ENCODE measurements at regions of chr1 and their contacts with region 1.

Region 1: GRCh38 chr1:245091818-245092637 is 62.8 kb upstream of the KIF26B start:
- DNase-seq: peak; percentile 99
- H3K4me3 ChIP-seq: no peak overlapping the region
- H3K27ac ChIP-seq: peak overlapping the region; percentile 96
- H3K4me1 ChIP-seq: peaks cover 23% of the 10 kb centered on the region
- H3K27me3 ChIP-seq: no peaks in the 10 kb centered on the region
- CTCF ChIP-seq: no peak
- POLR2A ChIP-seq: peak; percentile 63

Region 2: DNA sequence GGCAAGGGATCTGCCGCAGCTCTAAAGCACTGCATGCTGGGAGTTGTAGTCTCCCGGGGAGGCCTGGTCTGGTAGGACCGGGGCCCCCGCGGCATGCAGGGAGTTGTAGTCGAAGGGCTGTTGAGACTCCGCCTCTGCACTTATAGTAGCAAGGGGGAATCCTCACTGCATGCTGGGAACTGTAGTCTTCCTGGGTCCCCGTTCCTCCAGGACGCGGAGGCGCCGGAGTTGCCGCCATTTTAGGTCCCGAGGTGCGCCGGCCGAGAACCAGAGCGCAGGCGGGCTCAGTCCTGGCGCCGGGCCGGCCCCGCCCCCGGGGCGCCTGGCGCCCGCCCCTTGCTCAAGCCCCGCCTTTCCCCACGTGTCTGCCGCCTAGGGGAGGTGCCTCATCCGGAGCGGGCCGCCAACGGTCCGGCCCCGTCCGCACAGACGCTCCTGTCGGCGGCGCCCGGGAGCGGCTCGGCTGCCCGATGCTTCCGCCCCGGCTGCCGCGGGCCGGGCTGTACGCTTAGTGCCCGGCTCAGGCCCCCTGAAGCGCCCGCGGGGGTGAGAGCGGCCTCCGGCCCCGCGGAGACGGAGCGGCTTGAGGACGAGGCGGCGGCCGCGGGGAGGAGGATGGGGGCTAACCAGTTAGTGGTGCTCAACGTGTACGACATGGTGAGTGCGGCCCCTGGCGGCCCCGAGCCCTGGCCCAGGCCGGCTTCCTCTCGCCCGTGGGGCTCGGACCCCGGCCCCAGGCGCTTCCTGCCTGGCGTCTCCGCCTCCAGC is 439.1 kb before region 1 on chr1 and contains the start of gene DESI2:
- CTCF ChIA-PET with region 1: no interaction called
- POLR2A ChIA-PET with region 1: no interaction called
- dilution Hi-C with region 1: no loop called
- intact Hi-C with region 1: loop called (anchors 5 kb)
- DNase-seq: peak; percentile 99
- H3K4me3 ChIP-seq: peak within 1 kb of the TSS; percentile 58 to 98 (median 90)
- H3K27ac ChIP-seq: peak within 1 kb of the TSS; percentile 83
- H3K4me1 ChIP-seq: peaks cover 16% of the 10 kb centered on the region
- H3K27me3 ChIP-seq: peaks cover 2 to 3% of the 10 kb centered on the region in 2 experiments
- CTCF ChIP-seq: peak; percentile 31 to 54
- POLR2A ChIP-seq: peak; percentile 96
- total RNA-seq, gene DESI2: 37.2 TPM in 2 replicates

Region 3: GRCh38 chr1:244864253-244865027 is 227.6 kb before region 1 on chr1 and contains the start of gene HNRNPU:
- CTCF ChIA-PET with region 1: no interaction called
- POLR2A ChIA-PET with region 1: no interaction called
- dilution Hi-C with region 1: no loop called
- intact Hi-C with region 1: loop called (anchors 1 kb)
- DNase-seq: peak; percentile 98
- H3K4me3 ChIP-seq: peak within 1 kb of the TSS; percentile 87 to 96 (median 94)
- H3K27ac ChIP-seq: peak within 1 kb of the TSS; percentile 89
- H3K4me1 ChIP-seq: peaks cover 30% of the 10 kb centered on the region
- H3K27me3 ChIP-seq: no peaks in the 10 kb centered on the region
- CTCF ChIP-seq: peak; percentile 26 to 33
- POLR2A ChIP-seq: peak; percentile 96
- total RNA-seq, gene HNRNPU: 398 and 417 TPM in 2 replicates

Region 4: GRCh38 chr1:244970661-244971551 is 121.1 kb before region 1 on chr1:
- CTCF ChIA-PET with region 1: interaction called, 5 read pairs
- POLR2A ChIA-PET with region 1: no interaction called
- dilution Hi-C with region 1: no loop called
- intact Hi-C with region 1: loop called (anchors 2 kb)
- DNase-seq: peak; percentile 94
- H3K4me3 ChIP-seq: peak overlapping the region; percentile 37 to 86 (median 80)
- H3K27ac ChIP-seq: peak overlapping the region; percentile 96
- H3K4me1 ChIP-seq: peaks cover 15% of the 10 kb centered on the region
- H3K27me3 ChIP-seq: no peaks in the 10 kb centered on the region
- CTCF ChIP-seq: peak; percentile 47 to 77
- POLR2A ChIP-seq: peak; percentile 86

Region 5: GRCh38 chr1:245107776-245108645 is 16.0 kb after region 1 on chr1:
- CTCF ChIA-PET with region 1: no interaction called
- POLR2A ChIA-PET with region 1: no interaction called
- dilution Hi-C with region 1: no loop called
- intact Hi-C with region 1: no loop called
- DNase-seq: no peak
- H3K4me3 ChIP-seq: no peak overlapping the region
- H3K27ac ChIP-seq: no peak overlapping the region
- H3K4me1 ChIP-seq: no peaks in the 10 kb centered on the region
- H3K27me3 ChIP-seq: no peaks in the 10 kb centered on the region
- CTCF ChIP-seq: no peak
- POLR2A ChIP-seq: no peak

Region 6: GRCh38 chr1:245874942-245875580 is 783.0 kb after region 1 on chr1:
- CTCF ChIA-PET with region 1: no interaction called
- POLR2A ChIA-PET with region 1: no interaction called
- dilution Hi-C with region 1: no loop called
- intact Hi-C with region 1: loop called (anchors 1 kb)
- DNase-seq: peak; percentile 95
- H3K4me3 ChIP-seq: no peak overlapping the region
- H3K27ac ChIP-seq: peak overlapping the region; percentile 50
- H3K4me1 ChIP-seq: peaks cover 22% of the 10 kb centered on the region
- H3K27me3 ChIP-seq: no peaks in the 10 kb centered on the region
- CTCF ChIP-seq: no peak
- POLR2A ChIP-seq: no peak

Region 7: DNA sequence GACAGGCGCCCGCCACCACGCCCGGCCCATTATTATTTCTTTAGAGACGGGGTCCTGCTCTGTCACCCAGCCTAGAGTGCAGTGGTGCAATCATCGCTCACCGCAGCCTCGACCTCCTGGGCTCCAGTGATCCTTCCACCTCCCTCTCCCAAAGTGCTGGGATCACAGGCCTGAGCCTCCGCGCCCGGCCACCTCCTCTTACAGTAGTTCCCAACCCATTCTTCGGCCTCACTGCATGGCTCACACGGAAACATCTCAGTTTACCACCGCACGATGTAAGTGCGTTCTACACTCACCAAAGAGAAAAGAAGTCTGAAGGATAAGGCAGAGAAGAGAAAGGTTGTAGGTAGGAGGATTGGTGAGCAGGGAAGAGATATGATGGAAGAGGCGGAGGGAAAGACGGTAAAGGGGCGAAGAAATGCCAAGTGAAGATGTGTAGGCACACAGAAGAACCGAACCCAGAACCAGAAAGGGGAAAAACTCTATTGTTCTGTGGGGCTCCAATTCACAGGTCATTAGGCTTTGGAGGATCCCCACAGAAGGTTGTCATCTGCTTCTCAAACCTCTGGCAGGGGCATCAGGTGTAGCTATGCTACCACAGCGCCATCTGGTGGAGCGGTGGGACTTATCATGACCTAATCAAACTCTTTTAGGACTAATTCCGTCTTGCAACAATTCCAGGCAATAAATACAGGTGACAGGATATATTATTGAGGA is 910.9 kb after region 1 on chr1:
- CTCF ChIA-PET with region 1: no interaction called
- POLR2A ChIA-PET with region 1: no interaction called
- dilution Hi-C with region 1: no loop called
- intact Hi-C with region 1: loop called (anchors 5 kb)
- DNase-seq: peak; percentile 83
- H3K4me3 ChIP-seq: no peak overlapping the region
- H3K27ac ChIP-seq: no peak overlapping the region
- H3K4me1 ChIP-seq: no peaks in the 10 kb centered on the region
- H3K27me3 ChIP-seq: no peaks in the 10 kb centered on the region
- CTCF ChIP-seq: peak; percentile 70 to 77
- POLR2A ChIP-seq: no peak

Region 8: DNA sequence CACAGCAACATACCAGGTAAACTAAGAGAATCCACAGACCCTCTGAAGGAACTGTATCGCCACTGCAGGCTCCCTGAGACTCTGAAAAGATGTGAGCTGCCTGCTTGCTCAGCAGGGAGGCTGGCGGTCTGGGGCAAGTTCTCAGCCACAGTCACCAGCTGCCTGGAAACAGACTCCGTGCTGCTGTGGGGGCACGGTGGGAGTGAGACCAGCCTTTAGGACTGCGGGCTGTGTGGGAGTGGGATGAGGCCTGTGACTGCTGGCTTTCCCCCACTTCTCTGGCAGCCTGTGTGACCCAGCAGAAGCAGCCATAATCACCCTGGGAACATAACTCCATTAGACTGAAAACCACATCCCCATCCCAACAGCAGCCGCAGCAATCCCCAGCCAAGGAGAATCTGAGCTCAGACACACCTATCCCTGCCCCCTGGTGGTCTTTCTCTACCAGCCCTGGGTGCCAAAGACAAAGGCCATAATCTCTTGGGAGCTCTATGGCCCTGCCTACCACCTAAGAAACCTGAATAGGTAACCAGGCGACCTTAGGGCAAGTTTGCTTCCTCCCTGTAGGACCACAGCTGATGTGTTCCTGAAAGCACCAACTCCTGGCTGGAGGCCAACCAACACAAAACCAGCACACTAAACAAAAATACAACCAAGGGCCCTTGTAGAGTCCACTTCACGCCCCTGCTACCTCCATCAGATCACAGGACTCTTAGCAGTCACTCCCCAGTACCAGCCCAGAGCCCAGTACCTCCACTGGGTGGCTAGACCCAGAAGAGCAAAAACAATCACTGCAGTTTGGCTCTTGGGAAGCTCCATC is 1263.6 kb after region 1 on chr1:
- CTCF ChIA-PET with region 1: no interaction called
- POLR2A ChIA-PET with region 1: no interaction called
- dilution Hi-C with region 1: no loop called
- intact Hi-C with region 1: loop called (anchors 2 kb)
- DNase-seq: peak; percentile 44
- H3K4me3 ChIP-seq: no peak overlapping the region
- H3K27ac ChIP-seq: peak overlapping the region; percentile 83
- H3K4me1 ChIP-seq: peaks cover 24% of the 10 kb centered on the region
- H3K27me3 ChIP-seq: no peaks in the 10 kb centered on the region
- CTCF ChIP-seq: peak in 1 of 2 donors; percentile 18
- POLR2A ChIP-seq: no peak